A549 (cell line): ENCODE measurements at regions of chr10 and their contacts with region 1.

Region 1: GRCh38 chr10:58237014-58237830 is 30.5 kb downstream of the IPMK start:
- DNase-seq: peak; percentile 70 to 76
- ATAC-seq: peak; percentile 98
- H3K4me3 ChIP-seq: no peak overlapping the region
- H3K27ac ChIP-seq: peak overlapping the region; percentile 51 to 73
- H3K4me1 ChIP-seq: peaks cover 56% of the 10 kb centered on the region
- CTCF ChIP-seq: no peak
- EP300 ChIP-seq: no peak
- POLR2A ChIP-seq: no peak
- RAD21 ChIP-seq: no peak; a peak in 1 of 5 replicates

Region 2: DNA sequence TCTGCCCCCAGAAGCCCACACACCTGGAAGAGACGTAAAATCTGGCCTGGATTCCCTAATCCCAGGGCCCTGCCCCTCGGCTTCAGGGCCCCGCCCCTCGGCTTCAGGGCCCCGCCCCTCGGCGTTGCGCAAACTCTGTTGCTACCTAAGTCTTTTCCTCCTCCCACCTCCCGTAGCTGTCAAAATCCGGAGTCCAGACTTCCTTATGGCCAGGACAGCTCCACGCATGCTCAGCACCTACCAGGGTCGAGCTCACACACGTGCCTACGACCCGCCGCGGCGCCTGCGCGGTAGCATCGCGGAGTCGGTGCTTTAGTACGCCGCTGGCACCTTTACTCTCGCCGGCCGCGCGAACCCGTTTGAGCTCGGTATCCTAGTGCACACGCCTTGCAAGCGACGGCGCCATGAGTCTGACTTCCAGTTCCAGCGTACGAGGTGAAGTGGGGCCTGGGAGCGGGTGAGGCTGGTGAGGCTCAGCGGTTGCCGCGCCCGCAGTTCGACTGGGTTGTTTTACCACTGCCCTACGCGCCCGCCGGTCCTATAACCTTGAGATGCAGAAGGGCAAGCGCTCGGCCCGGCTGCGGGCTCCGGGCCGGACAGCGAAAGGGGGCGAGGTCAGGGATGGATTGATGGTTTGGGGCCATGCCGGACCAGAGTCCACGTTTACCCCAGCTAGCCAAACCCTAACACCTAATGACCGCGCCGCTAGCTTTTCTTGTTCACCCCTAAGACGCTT is 31.8 kb after region 1 on chr10 and contains the start of gene CISD1:
- CTCF ChIA-PET with region 1: no interaction called
- POLR2A ChIA-PET with region 1: interaction called, 11 read pairs
- DNase-seq: peak; percentile 98 to 100
- ATAC-seq: peak; percentile 65 to 86
- H3K4me3 ChIP-seq: peak within 1 kb of the TSS; percentile 61
- H3K27ac ChIP-seq: peak within 1 kb of the TSS; percentile 83 to 94
- H3K4me1 ChIP-seq: peaks cover 31% of the 10 kb centered on the region; the same call in 2 of the 3 replicates
- CTCF ChIP-seq: no peak
- EP300 ChIP-seq: no peak
- POLR2A ChIP-seq: peak; percentile 81
- RAD21 ChIP-seq: no peak
- polyA plus RNA-seq, gene CISD1: 102 and 111 TPM in 2 replicates